ENCODE measurements at regions of chr19 and their contacts with region 1.

Region 1: GRCh38 chr19:18636183-18636968 is 452 bp upstream of the KLHL26 start:
- DNase-seq: peak; percentile 98
- ATAC-seq: peak; percentile 87
- H3K4me3 ChIP-seq: peak overlapping the region in 4 of 5 experiments; percentile 71 to 95 (median 82)
- H3K4me3 Mint-ChIP-seq: peak overlapping the region; percentile 95
- H3K27ac ChIP-seq: peak overlapping the region; percentile 46 to 84
- H3K27ac Mint-ChIP-seq: peak overlapping the region; percentile 95
- H3K4me1 ChIP-seq: peaks cover 12 to 27% of the 10 kb centered on the region in 2 donors
- H3K4me1 Mint-ChIP-seq: peaks cover 25% of the 10 kb centered on the region
- H3K27me3 ChIP-seq: no peaks in the 10 kb centered on the region
- H3K27me3 Mint-ChIP-seq: peaks cover 3% of the 10 kb centered on the region
- CTCF ChIP-seq: no peak

Region 2: DNA sequence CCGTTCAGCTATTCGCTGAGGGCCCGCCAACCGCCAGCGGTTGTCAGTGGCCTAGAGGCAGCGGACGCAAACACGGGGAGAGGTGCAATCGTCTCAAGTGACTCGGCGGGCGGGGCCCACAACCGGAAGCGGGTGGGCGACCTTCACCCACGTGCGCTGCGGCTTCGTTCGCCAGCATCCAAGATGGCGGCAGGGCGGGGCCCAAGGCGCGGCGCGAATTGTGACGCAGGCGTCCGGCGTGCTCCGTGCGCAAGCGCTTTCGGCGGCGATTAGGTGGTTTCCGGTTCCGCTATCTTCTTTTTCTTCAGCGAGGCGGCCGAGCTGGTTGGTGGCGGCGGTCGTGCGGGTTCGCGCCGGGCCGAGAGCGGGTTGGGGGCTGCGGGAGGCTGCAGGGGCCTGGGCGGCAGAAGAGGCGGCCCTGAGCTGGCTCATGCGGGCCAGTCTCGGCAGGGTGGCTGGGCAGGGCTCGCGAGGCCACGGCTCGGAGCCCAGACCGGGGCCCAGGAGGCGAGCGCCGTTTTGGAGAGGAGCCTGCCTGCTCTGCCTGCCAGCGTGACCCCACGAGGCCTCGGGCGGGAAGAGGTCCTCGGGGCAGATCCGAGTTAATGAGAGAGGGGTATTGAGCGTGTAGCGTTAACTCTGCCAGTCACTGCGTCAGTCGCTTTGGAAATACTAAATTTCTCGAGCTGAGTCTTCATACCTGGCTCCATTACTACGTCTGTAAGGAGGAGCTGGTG is 64.6 kb before region 1 on chr19 and contains the start of gene UBA52:
- CTCF ChIA-PET with region 1: no interaction called
- POLR2A ChIA-PET with region 1: no interaction called
- intact Hi-C with region 1: loop called (anchors 1 kb)
- DNase-seq: peak; percentile 99
- ATAC-seq: peak; percentile 93
- H3K4me3 ChIP-seq: peak within 1 kb of the TSS; percentile 69 to 94 (median 86)
- H3K4me3 Mint-ChIP-seq: peak within 1 kb of the TSS; percentile 94
- H3K27ac ChIP-seq: peak within 1 kb of the TSS; percentile 85 to 95
- H3K27ac Mint-ChIP-seq: peak within 1 kb of the TSS; percentile 90
- H3K4me1 ChIP-seq: peaks cover 12 to 25% of the 10 kb centered on the region in 2 donors
- H3K4me1 Mint-ChIP-seq: peaks cover 16% of the 10 kb centered on the region
- H3K27me3 ChIP-seq: no peaks in the 10 kb centered on the region
- H3K27me3 Mint-ChIP-seq: no peaks in the 10 kb centered on the region
- CTCF ChIP-seq: no peak
- total RNA-seq, gene UBA52: 1,690 and 1,837 TPM in 2 replicates

Region 3: GRCh38 chr19:18683213-18683939 is 47.0 kb after region 1 on chr19 and contains the start of gene CRTC1:
- CTCF ChIA-PET with region 1: no interaction called
- POLR2A ChIA-PET with region 1: no interaction called
- intact Hi-C with region 1: loop called (anchors 1 kb)
- DNase-seq: peak; percentile 97
- ATAC-seq: peak; percentile 87
- H3K4me3 ChIP-seq: peak within 1 kb of the TSS; percentile 49 to 81 (median 73)
- H3K4me3 Mint-ChIP-seq: peak within 1 kb of the TSS; percentile 90
- H3K27ac ChIP-seq: peak within 1 kb of the TSS; percentile 46 to 67
- H3K27ac Mint-ChIP-seq: peak within 1 kb of the TSS; percentile 93
- H3K4me1 ChIP-seq: peaks cover 12 to 20% of the 10 kb centered on the region in 2 donors
- H3K4me1 Mint-ChIP-seq: peaks cover 30% of the 10 kb centered on the region
- H3K27me3 ChIP-seq: no peaks in the 10 kb centered on the region
- H3K27me3 Mint-ChIP-seq: no peaks in the 10 kb centered on the region
- CTCF ChIP-seq: no peak
- total RNA-seq, gene CRTC1: 30.1 and 31.9 TPM in 2 replicates

Region 4: GRCh38 chr19:18700501-18701249 is 64.3 kb after region 1 on chr19:
- CTCF ChIA-PET with region 1: no interaction called
- POLR2A ChIA-PET with region 1: no interaction called
- intact Hi-C with region 1: loop called (anchors 5 kb)
- DNase-seq: peak; percentile 84
- ATAC-seq: peak; percentile 87
- H3K4me3 ChIP-seq: peak overlapping the region; percentile 44 to 76 (median 67)
- H3K4me3 Mint-ChIP-seq: peak overlapping the region; percentile 95
- H3K27ac ChIP-seq: peak overlapping the region; percentile 81 to 84
- H3K27ac Mint-ChIP-seq: peak overlapping the region; percentile 98
- H3K4me1 ChIP-seq: peaks cover 33 to 62% of the 10 kb centered on the region in 2 donors
- H3K4me1 Mint-ChIP-seq: peaks cover 44% of the 10 kb centered on the region
- H3K27me3 ChIP-seq: no peaks in the 10 kb centered on the region
- H3K27me3 Mint-ChIP-seq: no peaks in the 10 kb centered on the region
- CTCF ChIP-seq: no peak

Region 5: GRCh38 chr19:18785179-18786128 is 149.1 kb after region 1 on chr19:
- CTCF ChIA-PET with region 1: no interaction called
- POLR2A ChIA-PET with region 1: no interaction called
- intact Hi-C with region 1: loop called (anchors 5 kb)
- DNase-seq: peak; percentile 73
- ATAC-seq: peak; percentile 56
- H3K4me3 ChIP-seq: no peak overlapping the region
- H3K4me3 Mint-ChIP-seq: peak overlapping the region; percentile 57
- H3K27ac ChIP-seq: no peak overlapping the region
- H3K27ac Mint-ChIP-seq: no peak overlapping the region
- H3K4me1 ChIP-seq: peaks cover 41 to 55% of the 10 kb centered on the region in 2 donors
- H3K4me1 Mint-ChIP-seq: peaks cover 53% of the 10 kb centered on the region
- H3K27me3 ChIP-seq: peaks cover 0 to 60% (median 31%) of the 10 kb centered on the region in 4 experiments
- H3K27me3 Mint-ChIP-seq: peaks cover 44% of the 10 kb centered on the region
- CTCF ChIP-seq: no peak

Region 6: GRCh38 chr19:18856385-18857126 is 220.2 kb after region 1 on chr19:
- CTCF ChIA-PET with region 1: no interaction called
- POLR2A ChIA-PET with region 1: no interaction called
- intact Hi-C with region 1: no loop called
- DNase-seq: no peak
- ATAC-seq: no peak
- H3K4me3 ChIP-seq: no peak overlapping the region
- H3K4me3 Mint-ChIP-seq: no peak overlapping the region
- H3K27ac ChIP-seq: no peak overlapping the region
- H3K27ac Mint-ChIP-seq: no peak overlapping the region
- H3K4me1 ChIP-seq: peaks cover 2 to 15% of the 10 kb centered on the region in 2 donors
- H3K4me1 Mint-ChIP-seq: peaks cover 7% of the 10 kb centered on the region
- H3K27me3 ChIP-seq: no peaks in the 10 kb centered on the region
- H3K27me3 Mint-ChIP-seq: no peaks in the 10 kb centered on the region
- CTCF ChIP-seq: no peak

Region 7: GRCh38 chr19:19033426-19034203 is 397.2 kb after region 1 on chr19 and contains the starts of genes ARMC6 and SUGP2:
- CTCF ChIA-PET with region 1: no interaction called
- POLR2A ChIA-PET with region 1: no interaction called
- intact Hi-C with region 1: loop called (anchors 2 kb)
- DNase-seq: peak; percentile 98
- ATAC-seq: peak; percentile 82
- H3K4me3 ChIP-seq: peak within 1 kb of the TSS; percentile 68 to 84 (median 74)
- H3K4me3 Mint-ChIP-seq: peak within 1 kb of the TSS; percentile 96
- H3K27ac ChIP-seq: peak within 1 kb of the TSS; percentile 65 to 76
- H3K27ac Mint-ChIP-seq: peak within 1 kb of the TSS; percentile 93
- H3K4me1 ChIP-seq: peaks cover 18 to 24% of the 10 kb centered on the region in 2 donors
- H3K4me1 Mint-ChIP-seq: peaks cover 26% of the 10 kb centered on the region
- H3K27me3 ChIP-seq: no peaks in the 10 kb centered on the region
- H3K27me3 Mint-ChIP-seq: no peaks in the 10 kb centered on the region
- CTCF ChIP-seq: no peak
- total RNA-seq, gene ARMC6: 15.2 TPM in 2 replicates
- total RNA-seq, gene SUGP2: 154 and 164 TPM in 2 replicates

Region 8: GRCh38 chr19:19063183-19064097 is 427.1 kb after region 1 on chr19 and contains the start of gene SLC25A42:
- CTCF ChIA-PET with region 1: no interaction called
- POLR2A ChIA-PET with region 1: no interaction called
- intact Hi-C with region 1: loop called (anchors 1 kb)
- DNase-seq: peak; percentile 100
- ATAC-seq: peak; percentile 89
- H3K4me3 ChIP-seq: peak within 1 kb of the TSS; percentile 78 to 97 (median 84)
- H3K4me3 Mint-ChIP-seq: peak within 1 kb of the TSS; percentile 91
- H3K27ac ChIP-seq: peak within 1 kb of the TSS; percentile 71 to 83
- H3K27ac Mint-ChIP-seq: peak within 1 kb of the TSS; percentile 92
- H3K4me1 ChIP-seq: peaks cover 31 to 40% of the 10 kb centered on the region in 2 donors
- H3K4me1 Mint-ChIP-seq: peaks cover 39% of the 10 kb centered on the region
- H3K27me3 ChIP-seq: no peaks in the 10 kb centered on the region
- H3K27me3 Mint-ChIP-seq: no peaks in the 10 kb centered on the region
- CTCF ChIP-seq: no peak
- total RNA-seq, gene SLC25A42: 36.5 and 38.8 TPM in 2 replicates

Measured in B cell (primary cell).